Mammary epithelial cell (primary cell): ENCODE measurements at regions of chr4 and their contacts with region 1.

Region 1: GRCh38 chr4:116358588-116359222 is 726.7 kb downstream of the TRAM1L1 start:
- DNase-seq: peak; percentile 77
- H3K4me3 ChIP-seq: no peak overlapping the region
- H3K27ac ChIP-seq: no peak overlapping the region
- H3K4me1 ChIP-seq: peaks cover 11% of the 10 kb centered on the region
- H3K27me3 ChIP-seq: no peaks in the 10 kb centered on the region
- CTCF ChIP-seq: peak; percentile 71 to 81

Region 2: GRCh38 chr4:116055857-116056827 is 302.6 kb before region 1 on chr4:
- CTCF ChIA-PET with region 1: no interaction called
- dilution Hi-C with region 1: no loop called
- in situ Hi-C with region 1: no loop called
- intact Hi-C with region 1: loop called (anchors 5 kb)
- DNase-seq: peak; percentile 1
- H3K4me3 ChIP-seq: no peak overlapping the region
- H3K27ac ChIP-seq: no peak overlapping the region
- H3K4me1 ChIP-seq: no peaks in the 10 kb centered on the region
- H3K27me3 ChIP-seq: no peaks in the 10 kb centered on the region
- CTCF ChIP-seq: peak; percentile 25 to 44

Region 3: GRCh38 chr4:116180157-116180601 is 178.5 kb before region 1 on chr4:
- CTCF ChIA-PET with region 1: no interaction called
- dilution Hi-C with region 1: no loop called
- in situ Hi-C with region 1: no loop called
- intact Hi-C with region 1: loop called (anchors 2 kb)
- DNase-seq: peak; percentile 4
- H3K4me3 ChIP-seq: no peak overlapping the region
- H3K27ac ChIP-seq: no peak overlapping the region
- H3K4me1 ChIP-seq: no peaks in the 10 kb centered on the region
- H3K27me3 ChIP-seq: no peaks in the 10 kb centered on the region
- CTCF ChIP-seq: peak; percentile 37 to 55

Region 4: DNA sequence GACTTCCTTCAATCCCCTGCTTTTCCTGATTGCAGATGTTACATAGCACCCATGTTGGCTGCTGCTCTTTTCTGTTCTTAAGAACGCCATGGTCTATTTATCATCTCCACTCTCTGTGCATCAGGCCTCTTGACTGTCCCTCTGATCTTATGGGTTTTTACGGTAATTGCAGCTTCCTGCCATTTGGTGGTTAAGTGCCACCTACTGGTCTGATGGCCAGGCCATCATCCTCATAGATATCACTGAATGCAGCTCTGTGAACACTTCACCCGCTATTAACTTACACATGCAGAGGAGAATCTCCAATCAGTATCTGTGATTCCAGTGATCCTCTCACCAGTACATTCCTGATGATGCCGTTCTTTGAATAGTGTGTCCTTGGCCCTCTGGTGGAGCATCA is 344.2 kb after region 1 on chr4:
- CTCF ChIA-PET with region 1: interaction called, 4 read pairs
- dilution Hi-C with region 1: no loop called
- in situ Hi-C with region 1: no loop called
- intact Hi-C with region 1: loop called (anchors 1 kb)
- DNase-seq: no peak
- H3K4me3 ChIP-seq: no peak overlapping the region
- H3K27ac ChIP-seq: no peak overlapping the region
- H3K4me1 ChIP-seq: no peaks in the 10 kb centered on the region
- H3K27me3 ChIP-seq: no peaks in the 10 kb centered on the region
- CTCF ChIP-seq: peak in 1 of 2 donors; percentile 19

Region 5: DNA sequence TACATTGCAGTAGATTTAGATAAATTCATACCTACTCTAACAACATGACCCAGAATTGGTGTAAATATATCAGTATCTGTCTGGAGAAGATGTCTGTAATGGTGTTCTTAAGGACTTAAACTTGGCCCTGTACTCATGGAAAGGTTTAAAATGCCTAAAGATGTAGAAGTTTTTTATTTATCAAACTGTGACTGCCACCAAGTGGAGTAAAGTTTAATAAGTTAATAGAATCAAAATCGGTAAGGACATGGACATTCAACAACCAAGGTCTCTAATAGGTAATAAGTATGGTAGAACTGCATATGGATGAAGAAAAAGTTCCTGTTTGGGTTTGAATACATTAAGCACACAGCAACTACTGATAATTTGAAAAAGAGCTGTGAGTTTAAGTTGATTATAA is 1201.6 kb after region 1 on chr4:
- CTCF ChIA-PET with region 1: no interaction called
- dilution Hi-C with region 1: no loop called
- in situ Hi-C with region 1: no loop called
- intact Hi-C with region 1: loop called (anchors 5 kb)
- DNase-seq: peak; percentile 19
- H3K4me3 ChIP-seq: no peak overlapping the region
- H3K27ac ChIP-seq: no peak overlapping the region
- H3K4me1 ChIP-seq: no peaks in the 10 kb centered on the region
- H3K27me3 ChIP-seq: no peaks in the 10 kb centered on the region
- CTCF ChIP-seq: peak; percentile 22 to 26